CD14-positive monocyte (primary cell): ENCODE measurements at regions of chr22 and their contacts with region 1.

Region 1: DNA sequence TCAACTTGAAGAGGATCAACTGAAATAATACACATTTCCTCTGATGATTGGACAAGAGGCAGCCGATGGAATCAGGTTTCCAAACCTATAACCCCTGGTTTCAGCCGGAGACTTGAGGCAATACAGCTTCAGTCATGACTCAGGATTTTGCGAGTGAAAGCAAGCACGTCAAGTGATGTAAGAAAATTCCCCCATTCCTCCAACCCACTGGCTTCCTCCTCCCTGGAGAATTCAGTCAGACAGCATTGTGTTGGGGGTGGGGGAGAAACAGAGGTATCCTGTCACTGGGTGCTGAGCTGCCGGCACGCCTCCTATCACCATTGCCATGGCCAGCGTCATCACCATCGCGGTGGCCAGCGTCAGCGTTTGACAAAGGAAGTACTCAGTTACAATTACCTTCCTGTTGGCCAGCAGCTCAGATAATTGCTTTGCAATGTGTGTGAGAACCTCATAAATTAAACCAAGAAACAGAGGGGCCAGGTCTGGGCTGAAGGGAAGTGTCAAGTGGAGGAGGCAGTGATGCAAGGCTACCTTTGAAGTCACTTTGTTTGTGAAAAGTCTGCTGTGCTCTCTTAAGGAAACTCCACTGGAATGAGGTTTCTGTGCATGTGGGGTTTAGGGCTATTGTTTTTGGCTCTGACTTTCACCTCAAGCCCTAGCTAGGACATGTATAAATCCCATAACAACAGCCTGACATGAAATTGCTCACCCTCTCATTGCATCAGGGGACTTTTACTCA is 50.2 kb downstream of the LIF start:
- DNase-seq: peak; percentile 99 to 100 (median 99)
- H3K4me3 ChIP-seq: peak overlapping the region in 1 of 3 experiments; percentile 23
- H3K4me3 Mint-ChIP-seq: peak overlapping the region in 1 of 2 donors; percentile 84
- H3K27ac ChIP-seq: peak overlapping the region; percentile 87 to 96
- H3K27ac Mint-ChIP-seq: peak overlapping the region; percentile 95 to 99 (median 98)
- H3K4me1 ChIP-seq: peaks cover 53 to 54% of the 10 kb centered on the region in 2 donors
- H3K4me1 Mint-ChIP-seq: peaks cover 58% of the 10 kb centered on the region
- H3K27me3 ChIP-seq: no peaks in the 10 kb centered on the region
- H3K27me3 Mint-ChIP-seq: peaks cover 0 to 4% (median 4%) of the 10 kb centered on the region in 3 donors
- CTCF ChIP-seq: no peak

Region 2: GRCh38 chr22:30262917-30263741 is 66.8 kb after region 1 on chr22:
- intact Hi-C with region 1: loop called in 1 of 2 experiments (anchors 2 kb)
- DNase-seq: peak; percentile 98 to 100 (median 98)
- H3K4me3 ChIP-seq: peak overlapping the region in 1 of 3 experiments; percentile 56
- H3K4me3 Mint-ChIP-seq: peak overlapping the region; percentile 78 to 94
- H3K27ac ChIP-seq: peak overlapping the region; percentile 34 to 82
- H3K27ac Mint-ChIP-seq: peak overlapping the region; percentile 76 to 99 (median 99)
- H3K4me1 ChIP-seq: peaks cover 75 to 79% of the 10 kb centered on the region in 2 donors
- H3K4me1 Mint-ChIP-seq: peaks cover 73% of the 10 kb centered on the region
- H3K27me3 ChIP-seq: no peaks in the 10 kb centered on the region
- H3K27me3 Mint-ChIP-seq: peaks cover 12 to 16% (median 12%) of the 10 kb centered on the region in 3 donors
- CTCF ChIP-seq: peak; percentile 100

Region 3: DNA sequence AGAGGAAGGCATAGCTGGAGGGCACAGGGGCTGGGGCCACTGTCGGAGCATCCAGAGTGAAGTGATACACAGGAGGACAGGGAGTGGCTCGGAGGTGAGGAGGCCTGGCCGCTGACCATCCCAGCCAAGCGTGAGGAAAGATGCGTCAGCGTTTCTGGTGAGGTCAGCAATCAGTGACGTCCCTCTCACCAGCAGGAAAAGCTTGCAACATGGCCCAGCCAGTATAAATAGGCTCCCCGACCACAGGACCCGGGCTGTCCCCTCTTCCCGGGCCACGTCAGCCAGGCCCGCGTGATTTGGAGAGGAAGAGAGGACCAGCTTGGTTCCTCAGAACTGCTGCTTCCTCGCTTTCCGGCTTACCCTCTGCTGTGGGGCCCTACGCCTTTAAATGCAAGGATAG is 74.5 kb after region 1 on chr22:
- intact Hi-C with region 1: loop called in 1 of 2 experiments (anchors 5 kb)
- DNase-seq: peak; percentile 99 to 100 (median 99)
- H3K4me3 ChIP-seq: peak overlapping the region in 1 of 3 experiments; percentile 40
- H3K4me3 Mint-ChIP-seq: peak overlapping the region; percentile 68 to 79
- H3K27ac ChIP-seq: peak overlapping the region; percentile 82 to 89
- H3K27ac Mint-ChIP-seq: peak overlapping the region; percentile 92 to 99 (median 99)
- H3K4me1 ChIP-seq: peaks cover 80 to 99% of the 10 kb centered on the region in 2 donors
- H3K4me1 Mint-ChIP-seq: peaks cover 90% of the 10 kb centered on the region
- H3K27me3 ChIP-seq: peaks cover 0 to 6% of the 10 kb centered on the region in 2 donors
- H3K27me3 Mint-ChIP-seq: peaks cover 9 to 27% (median 20%) of the 10 kb centered on the region in 3 donors
- CTCF ChIP-seq: no peak

Region 4: DNA sequence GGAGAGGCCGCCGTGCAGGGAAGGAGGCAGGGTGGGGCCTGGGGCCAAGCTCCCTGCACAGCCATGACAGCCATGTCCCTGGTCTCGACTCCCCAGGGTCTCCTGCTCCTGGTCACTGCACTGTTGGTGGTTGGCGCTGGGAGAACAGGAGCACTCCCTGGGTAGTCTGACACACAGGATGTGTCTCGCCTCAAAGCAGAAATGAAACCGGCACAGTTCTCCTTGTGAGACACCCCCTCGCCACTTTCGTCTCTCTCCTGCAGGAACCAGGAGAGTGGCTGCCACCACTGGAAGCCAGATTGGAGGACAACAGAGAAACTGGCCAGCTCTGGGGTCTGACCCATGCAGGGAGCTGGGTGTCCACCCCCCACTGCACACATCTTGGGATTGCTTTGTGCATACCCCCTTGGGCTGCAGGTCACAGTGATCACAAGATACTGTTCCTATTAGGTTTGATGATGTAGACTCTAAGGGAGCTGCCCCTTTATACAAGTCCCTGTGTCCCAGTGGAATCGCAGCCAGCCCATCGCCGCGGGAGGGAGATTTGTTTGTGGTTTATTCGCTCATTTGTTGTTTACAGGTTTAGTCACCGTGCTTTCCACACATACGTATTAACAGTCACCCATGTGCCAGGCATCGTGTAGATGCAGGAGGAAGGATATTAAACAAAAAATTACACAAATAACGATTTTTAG is 1721.1 kb after region 1 on chr22:
- intact Hi-C with region 1: no loop called
- DNase-seq: peak; percentile 74 to 90 (median 84)
- H3K4me3 ChIP-seq: peak overlapping the region in 2 of 3 experiments; percentile 20 to 68
- H3K4me3 Mint-ChIP-seq: peak overlapping the region; percentile 65 to 84
- H3K27ac ChIP-seq: peak overlapping the region; percentile 52 to 79
- H3K27ac Mint-ChIP-seq: peak overlapping the region; percentile 73 to 91 (median 86)
- H3K4me1 ChIP-seq: peaks cover 70 to 73% of the 10 kb centered on the region in 2 donors
- H3K4me1 Mint-ChIP-seq: peaks cover 73% of the 10 kb centered on the region
- H3K27me3 ChIP-seq: no peaks in the 10 kb centered on the region
- H3K27me3 Mint-ChIP-seq: peaks cover 0 to 1% (median 0%) of the 10 kb centered on the region in 3 donors
- CTCF ChIP-seq: no peak